ENCODE measurements at regions of chr4 and their contacts with region 1.

Region 1: DNA sequence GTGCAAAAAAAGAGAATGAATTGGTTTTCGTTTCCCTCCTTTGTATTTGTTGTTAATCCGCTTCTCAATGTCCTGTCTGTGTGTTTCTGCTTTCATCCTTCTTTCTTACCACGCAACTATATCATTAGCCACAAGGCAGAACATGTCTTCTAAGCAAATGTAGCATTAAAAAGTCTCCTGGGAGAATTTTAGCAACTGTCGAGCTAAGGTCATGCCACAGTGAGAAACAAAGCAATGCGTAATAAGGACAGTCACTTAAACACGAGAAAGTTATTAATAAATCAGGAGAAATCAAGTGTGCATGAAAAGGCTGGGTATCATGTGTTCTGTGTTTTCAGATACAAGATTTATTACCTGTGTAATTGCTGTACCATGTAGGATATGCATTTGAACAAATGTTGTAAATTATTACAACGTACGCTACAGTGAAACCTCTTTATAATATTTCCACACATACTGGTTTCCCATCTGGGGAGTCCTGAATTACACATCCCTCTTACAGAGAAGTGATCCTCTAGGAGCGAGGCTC is 890.8 kb downstream of the TRIML1 start:
- DNase-seq: no peak
- ATAC-seq: no peak

Region 2: DNA sequence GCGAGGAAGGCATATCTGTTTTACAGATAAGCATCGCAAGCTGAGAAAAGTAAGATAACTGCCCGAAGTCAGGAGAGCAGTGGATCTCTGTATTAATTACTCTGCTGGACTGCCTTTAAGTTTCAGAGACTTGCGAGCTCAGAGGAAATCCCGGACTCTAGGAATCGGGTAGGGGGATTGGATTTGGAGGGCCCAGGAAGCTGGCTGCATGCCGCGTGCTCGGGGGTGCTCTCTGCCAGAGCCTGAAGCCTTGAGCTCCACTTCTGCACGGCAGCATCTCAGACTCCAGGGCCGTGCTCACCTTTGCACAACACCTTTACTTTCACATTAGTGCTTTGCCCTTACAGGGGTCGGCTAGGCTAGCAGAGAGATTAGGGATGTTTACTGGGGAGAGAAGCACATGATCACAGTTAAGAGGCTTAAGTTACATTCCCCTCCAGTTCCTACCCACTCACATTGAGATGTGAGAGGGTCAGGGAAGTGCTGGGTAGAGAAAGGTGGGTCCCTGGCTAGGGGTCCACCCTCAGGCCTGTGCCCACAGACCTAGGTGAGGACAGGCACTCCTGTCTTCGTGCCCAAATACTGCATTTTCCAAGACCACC is 833.8 kb before region 1 on chr4:
- intact Hi-C with region 1: loop called (anchors 10 kb)
- DNase-seq: no peak
- ATAC-seq: no peak

Measured in Right ventricle myocardium inferior (tissue), 1 donor.